BJ (cell line): ENCODE measurements at regions of chr15 and their contacts with region 1.

Region 1: GRCh38 chr15:77496710-77497103 is 76.0 kb downstream of the HMG20A start:
- DNase-seq: peak; percentile 94
- H3K4me3 ChIP-seq: no peak overlapping the region
- H3K27me3 ChIP-seq: no peaks in the 10 kb centered on the region
- CTCF ChIP-seq: peak; percentile 98

Region 2: GRCh38 chr15:77107531-77108355 is 389.0 kb before region 1 on chr15:
- CTCF ChIA-PET with region 1: interaction called, 11 read pairs
- POLR2A ChIA-PET with region 1: no interaction called
- DNase-seq: no peak
- H3K4me3 ChIP-seq: no peak overlapping the region
- H3K27me3 ChIP-seq: no peaks in the 10 kb centered on the region
- CTCF ChIP-seq: peak; percentile 78

Region 3: DNA sequence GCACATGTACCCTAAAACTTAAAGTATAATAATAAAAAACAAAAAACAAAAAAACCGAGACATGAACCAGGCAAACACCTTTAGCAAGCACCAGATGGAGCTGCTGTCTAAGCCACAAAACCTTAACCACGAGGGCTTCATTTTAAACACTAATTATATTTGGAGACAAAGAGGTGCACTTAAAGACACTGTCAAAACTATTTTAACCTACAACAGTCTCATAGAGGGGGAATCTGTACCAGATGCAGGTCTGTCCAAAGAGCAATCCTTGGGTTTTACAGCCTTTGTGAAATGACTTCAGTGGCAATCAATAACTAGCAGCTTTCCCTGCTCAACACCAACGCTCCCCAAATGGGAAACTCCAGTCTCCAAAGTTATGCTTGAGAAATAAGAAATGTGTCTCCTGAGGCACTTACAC is 310.1 kb before region 1 on chr15:
- CTCF ChIA-PET with region 1: interaction called, 13 read pairs
- POLR2A ChIA-PET with region 1: interaction called, 6 read pairs
- DNase-seq: no peak
- H3K4me3 ChIP-seq: no peak overlapping the region
- H3K27me3 ChIP-seq: no peaks in the 10 kb centered on the region
- CTCF ChIP-seq: peak; percentile 52

Region 4: DNA sequence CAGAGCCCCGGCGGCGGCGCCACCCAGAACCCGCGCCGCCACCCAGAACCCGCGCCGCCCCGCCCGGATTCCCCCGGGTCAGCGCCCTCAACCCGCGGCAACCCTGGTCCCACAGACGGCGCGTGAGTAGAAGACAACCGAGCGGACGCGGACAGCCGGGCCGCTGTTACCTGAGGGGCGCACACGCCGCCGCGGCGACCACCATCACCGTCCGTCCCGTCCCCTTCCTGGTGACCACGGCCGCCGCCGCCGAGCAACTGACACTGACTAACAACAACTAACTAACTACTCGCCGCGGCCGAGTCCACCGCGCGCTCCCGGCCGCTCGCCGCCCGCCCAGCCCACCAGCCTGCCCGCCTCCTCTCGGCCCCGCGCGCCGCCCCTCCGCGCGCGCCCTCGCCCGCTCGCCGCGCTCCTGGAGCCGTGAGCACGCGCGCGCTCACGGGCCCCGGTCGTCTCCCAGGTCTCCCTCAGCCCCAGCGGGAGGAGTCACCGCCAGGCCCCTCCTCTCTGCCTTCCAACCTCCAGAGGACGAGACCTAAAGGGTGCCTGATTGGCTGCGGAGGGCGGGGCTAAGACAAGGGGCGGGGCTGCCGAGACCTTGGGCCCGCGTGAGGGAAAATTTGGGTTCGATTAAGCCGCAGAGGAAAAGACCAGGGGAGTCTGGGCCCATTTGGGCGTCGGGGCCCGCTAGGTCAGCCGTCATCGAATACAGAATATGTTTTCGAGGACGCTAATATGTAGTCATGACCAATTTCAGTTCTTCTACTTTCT is 76.7 kb before region 1 on chr15 and contains the start of gene PEAK1:
- CTCF ChIA-PET with region 1: interaction called, 14 read pairs
- POLR2A ChIA-PET with region 1: interaction called, 5 read pairs
- DNase-seq: peak; percentile 89
- H3K4me3 ChIP-seq: peak within 1 kb of the TSS; percentile 97
- H3K27me3 ChIP-seq: no peaks in the 10 kb centered on the region
- CTCF ChIP-seq: no peak
- polyA plus RNA-seq, gene PEAK1: 40.7 and 49.1 TPM in 2 replicates

Region 5: GRCh38 chr15:77482570-77482969 is 14.1 kb before region 1 on chr15:
- CTCF ChIA-PET with region 1: interaction called, 18 read pairs
- POLR2A ChIA-PET with region 1: no interaction called
- DNase-seq: peak; percentile 57
- H3K4me3 ChIP-seq: no peak overlapping the region
- H3K27me3 ChIP-seq: no peaks in the 10 kb centered on the region
- CTCF ChIP-seq: no peak

Region 6: GRCh38 chr15:77810130-77810571 is 313.4 kb after region 1 on chr15:
- CTCF ChIA-PET with region 1: no interaction called
- POLR2A ChIA-PET with region 1: no interaction called
- DNase-seq: no peak
- H3K4me3 ChIP-seq: no peak overlapping the region
- H3K27me3 ChIP-seq: no peaks in the 10 kb centered on the region; the same call in 1 of the 2 replicates
- CTCF ChIP-seq: no peak